PC-9 (cell line): ENCODE measurements at regions of chr4 and their contacts with region 1.

Region 1: DNA sequence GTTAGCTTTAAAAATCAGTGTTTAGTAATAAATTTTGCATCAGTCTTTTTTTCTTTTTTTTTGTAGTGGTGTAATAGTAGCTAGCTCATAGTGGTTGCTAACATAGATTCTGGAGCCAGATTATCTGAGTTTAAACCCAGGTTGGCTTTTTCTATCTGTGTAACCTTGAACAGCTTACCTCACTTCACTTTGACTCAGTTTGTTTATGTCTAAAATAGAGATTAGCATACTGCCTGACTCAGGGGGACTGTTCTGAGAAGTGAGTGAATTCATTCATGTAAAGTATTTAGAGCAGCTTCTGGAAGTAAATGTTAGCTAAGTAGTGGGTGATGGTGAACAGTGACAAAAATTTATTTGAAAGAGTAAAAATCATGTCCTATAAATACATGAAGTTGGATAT is 32.9 kb downstream of the CPEB2 start:
- DNase-seq: no peak
- H3K4me3 ChIP-seq: no peak overlapping the region
- H3K27ac ChIP-seq: no peak overlapping the region
- H3K4me1 ChIP-seq: no peaks in the 10 kb centered on the region
- H3K27me3 ChIP-seq: no peaks in the 10 kb centered on the region
- CTCF ChIP-seq: no peak

Region 2: DNA sequence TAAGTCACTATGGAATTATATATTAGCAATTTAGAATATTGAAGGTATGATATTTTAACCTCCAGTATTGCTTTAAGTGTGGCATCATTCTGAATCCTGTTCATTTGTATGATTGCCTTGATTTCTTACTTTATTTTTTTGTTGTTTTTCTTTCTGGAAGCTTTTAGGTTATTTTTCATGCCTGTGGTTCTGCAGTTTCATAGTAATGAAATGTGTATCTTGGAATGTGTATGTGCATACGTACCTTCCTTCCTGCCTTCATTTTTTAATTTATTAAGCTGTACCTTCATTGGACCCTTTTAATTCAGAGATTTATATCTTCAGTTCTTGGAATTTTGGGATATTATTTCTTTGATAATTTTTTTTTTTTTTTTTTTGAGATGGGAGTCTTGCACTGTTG is 10.8 kb before region 1 on chr4:
- CTCF ChIA-PET with region 1: no interaction called
- POLR2A ChIA-PET with region 1: interaction called, 10 read pairs
- intact Hi-C with region 1: no loop called
- DNase-seq: no peak
- H3K4me3 ChIP-seq: no peak overlapping the region
- H3K27ac ChIP-seq: no peak overlapping the region
- H3K4me1 ChIP-seq: no peaks in the 10 kb centered on the region
- H3K27me3 ChIP-seq: no peaks in the 10 kb centered on the region
- CTCF ChIP-seq: no peak